ENCODE measurements at regions of chr17 and their contacts with region 1.

Region 1: DNA sequence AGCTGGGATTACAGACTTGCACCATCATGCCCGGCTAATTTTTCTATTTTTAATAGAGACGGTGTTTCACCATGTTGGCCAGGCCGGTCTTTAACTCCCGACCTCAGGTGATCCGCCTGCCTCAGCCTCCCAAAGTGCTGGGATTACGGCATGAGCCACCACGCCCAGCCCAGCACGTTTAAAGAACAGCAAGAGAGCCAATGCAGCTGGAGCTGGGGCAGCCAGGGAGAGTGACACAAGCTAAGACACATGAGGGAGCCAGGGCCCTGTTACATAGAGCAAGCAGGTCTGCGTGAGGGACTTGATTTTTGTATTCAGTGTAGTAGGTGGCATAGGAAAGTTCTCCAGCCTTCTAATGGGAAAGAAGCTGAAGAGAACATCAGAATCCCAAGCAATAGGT is 21.7 kb upstream of the GOSR2 start:
- DNase-seq: no peak
- H3K4me3 ChIP-seq: no peak overlapping the region
- H3K27ac ChIP-seq: no peak overlapping the region
- H3K4me1 ChIP-seq: no peaks in the 10 kb centered on the region
- H3K27me3 ChIP-seq: no peaks in the 10 kb centered on the region
- CTCF ChIP-seq: no peak

Region 2: DNA sequence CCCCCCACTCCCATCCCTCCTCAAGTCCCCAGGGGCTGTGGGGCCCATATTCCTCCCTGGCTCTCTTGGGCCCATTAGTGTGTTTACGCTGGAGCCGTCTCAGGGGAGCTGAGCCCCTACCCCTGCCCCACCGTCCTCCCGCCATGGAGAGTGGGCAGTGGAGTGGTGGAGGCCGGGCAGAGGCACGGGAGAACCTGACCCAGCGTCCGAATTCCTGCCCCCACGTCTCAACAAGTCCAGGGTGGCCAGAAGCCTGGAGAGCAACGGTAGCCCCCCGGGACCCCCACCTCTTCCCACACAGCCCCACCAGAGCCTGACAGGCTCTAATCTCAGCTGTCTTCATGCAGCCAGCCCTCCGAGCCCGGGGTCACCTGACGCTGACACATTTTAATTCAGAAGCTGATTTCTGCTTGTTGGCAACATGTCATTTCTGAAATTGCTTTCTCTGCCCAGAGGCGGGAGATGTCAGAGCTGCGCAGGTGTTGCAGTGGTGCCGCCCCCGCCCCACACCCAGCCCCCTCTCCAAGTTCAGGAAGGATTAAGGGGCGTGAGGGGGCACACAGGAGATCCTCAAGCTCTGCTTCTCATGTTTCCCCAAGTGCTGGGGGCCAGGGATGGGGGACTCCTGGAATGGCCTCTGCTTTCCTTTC is 17.3 kb before region 1 on chr17:
- CTCF ChIA-PET with region 1: no interaction called
- dilution Hi-C with region 1: no loop called
- in situ Hi-C with region 1: no loop called
- intact Hi-C with region 1: loop called (anchors 1 kb)
- DNase-seq: no peak
- H3K4me3 ChIP-seq: no peak overlapping the region
- H3K27ac ChIP-seq: no peak overlapping the region
- H3K4me1 ChIP-seq: no peaks in the 10 kb centered on the region
- H3K27me3 ChIP-seq: no peaks in the 10 kb centered on the region
- CTCF ChIP-seq: no peak

Region 3: DNA sequence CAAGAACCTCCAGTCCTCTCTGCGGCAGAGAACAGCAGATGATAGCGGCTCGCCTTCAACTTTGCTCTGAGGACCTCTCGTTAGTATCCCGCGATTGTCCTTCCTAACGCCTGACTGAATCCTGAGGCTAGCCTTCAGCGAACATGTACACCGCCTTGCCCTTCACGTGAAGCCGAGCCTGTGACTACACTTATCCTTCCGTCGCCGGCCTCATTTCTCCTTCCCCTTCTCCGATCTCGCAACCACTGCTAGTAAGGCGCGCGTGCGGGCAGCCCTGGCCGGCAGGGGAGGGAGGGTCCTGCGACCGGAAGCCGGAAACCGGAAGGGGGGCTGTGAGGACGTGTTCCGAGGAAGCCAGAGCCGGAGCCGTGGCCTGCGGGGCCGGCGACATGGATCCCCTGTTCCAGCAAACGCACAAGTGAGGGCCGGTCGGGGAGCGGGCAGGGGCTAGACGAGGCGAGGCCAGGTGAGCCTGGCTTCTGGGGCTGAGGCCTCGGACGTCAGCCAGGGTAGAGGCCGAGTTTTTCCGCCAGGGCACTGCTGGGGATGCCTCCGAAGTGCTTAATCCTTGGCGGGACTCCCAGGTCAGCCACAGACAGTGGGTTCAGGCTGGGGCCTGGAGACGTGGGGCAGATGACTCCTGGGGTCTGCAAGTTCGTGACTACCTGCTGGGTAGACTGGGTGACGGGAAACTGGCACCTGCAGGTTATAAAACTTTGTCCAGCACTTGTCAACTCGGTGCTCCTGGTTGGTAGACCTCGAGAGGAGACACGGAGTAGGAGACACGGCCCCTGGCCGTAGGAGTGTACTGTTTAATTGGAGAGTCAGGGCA is 21.7 kb after region 1 on chr17 and contains the start of gene GOSR2:
- CTCF ChIA-PET with region 1: no interaction called
- dilution Hi-C with region 1: no loop called
- in situ Hi-C with region 1: no loop called
- intact Hi-C with region 1: no loop called
- DNase-seq: peak; percentile 87
- H3K4me3 ChIP-seq: peak within 1 kb of the TSS; percentile 70 to 100 (median 99)
- H3K27ac ChIP-seq: peak within 1 kb of the TSS; percentile 95
- H3K4me1 ChIP-seq: peaks cover 12% of the 10 kb centered on the region
- H3K27me3 ChIP-seq: no peaks in the 10 kb centered on the region
- CTCF ChIP-seq: no peak
- total RNA-seq, gene GOSR2: 38.8 to 56.8 TPM

Region 4: DNA sequence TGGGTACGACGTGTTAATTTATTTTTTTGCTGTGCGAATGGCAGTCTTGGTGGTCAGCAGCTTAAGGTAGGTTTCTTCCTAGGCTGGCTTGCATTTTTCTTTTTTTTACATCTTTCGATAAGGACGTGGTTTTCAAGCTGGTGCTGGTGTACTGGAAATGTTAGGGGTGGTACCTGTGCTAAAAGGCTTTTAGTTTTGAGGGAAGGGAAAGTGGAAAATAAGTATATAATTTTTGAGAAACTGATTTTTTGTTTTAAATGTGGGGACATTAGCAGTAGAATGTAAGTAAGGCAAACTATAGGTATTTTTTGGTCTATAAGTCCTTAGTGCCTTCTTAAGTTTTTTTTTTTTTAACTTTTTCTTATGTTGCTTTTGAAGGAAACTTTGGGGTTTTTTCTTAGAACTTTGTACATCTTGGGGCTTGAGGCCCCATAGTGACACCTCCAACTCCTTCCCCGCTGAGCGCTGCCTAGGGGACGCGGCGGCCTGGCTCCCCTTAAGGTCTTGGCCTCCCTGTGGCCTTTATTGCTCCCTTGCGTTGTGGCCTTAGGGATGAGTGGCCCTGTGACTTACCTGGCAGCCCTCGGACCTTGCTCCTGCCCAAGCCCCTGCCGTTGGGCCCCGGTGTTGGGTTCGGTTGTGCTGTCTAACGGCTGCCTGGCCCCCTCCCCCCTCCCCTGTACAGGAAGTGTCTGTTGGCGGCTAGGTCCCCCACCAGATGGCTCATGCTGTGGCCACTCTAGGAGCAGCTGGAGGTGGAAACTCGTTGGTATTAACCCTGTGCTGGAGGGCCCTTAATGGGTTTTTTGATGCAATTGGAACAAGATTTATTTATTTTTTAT is 165.8 kb after region 1 on chr17:
- CTCF ChIA-PET with region 1: no interaction called
- dilution Hi-C with region 1: no loop called
- in situ Hi-C with region 1: no loop called
- intact Hi-C with region 1: no loop called
- DNase-seq: peak; percentile 82
- H3K4me3 ChIP-seq: peak overlapping the region; percentile 95 to 100 (median 99)
- H3K27ac ChIP-seq: peak overlapping the region; percentile 92
- H3K4me1 ChIP-seq: peaks cover 24% of the 10 kb centered on the region
- H3K27me3 ChIP-seq: no peaks in the 10 kb centered on the region
- CTCF ChIP-seq: peak in 1 of 2 donors; percentile 17